ENCODE measurements at regions of chr18 and their contacts with region 1.

Region 1: GRCh38 chr18:24118750-24119577 is 19.9 kb upstream of the CABYR start:
- DNase-seq: peak in 41 of 42 donors; percentile 47 to 90 (median 76)

Region 2: DNA sequence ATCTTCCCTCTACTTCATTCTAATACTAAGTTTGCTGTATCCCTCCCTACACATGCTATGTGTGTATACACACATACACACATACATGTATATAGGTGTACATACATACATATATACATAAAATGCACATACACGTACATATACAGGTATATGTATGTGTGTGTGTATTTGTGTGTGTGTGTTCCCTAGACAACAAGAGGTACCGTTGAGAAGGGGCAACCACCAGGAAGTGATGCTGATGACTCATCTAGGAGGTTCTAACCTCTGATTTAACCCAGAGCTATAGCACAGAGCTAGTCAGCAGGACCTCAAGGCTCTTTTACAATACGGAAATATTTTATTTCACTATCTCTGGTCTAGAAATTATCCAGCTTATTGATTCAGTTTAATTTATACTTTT is 290.5 kb before region 1 on chr18:
- intact Hi-C with region 1: loop called (anchors 10 kb)
- DNase-seq: no peak

Measured in head of caudate nucleus (tissue), 42 donors.